ENCODE measurements at regions of chr13 and their contacts with region 1.

Region 1: DNA sequence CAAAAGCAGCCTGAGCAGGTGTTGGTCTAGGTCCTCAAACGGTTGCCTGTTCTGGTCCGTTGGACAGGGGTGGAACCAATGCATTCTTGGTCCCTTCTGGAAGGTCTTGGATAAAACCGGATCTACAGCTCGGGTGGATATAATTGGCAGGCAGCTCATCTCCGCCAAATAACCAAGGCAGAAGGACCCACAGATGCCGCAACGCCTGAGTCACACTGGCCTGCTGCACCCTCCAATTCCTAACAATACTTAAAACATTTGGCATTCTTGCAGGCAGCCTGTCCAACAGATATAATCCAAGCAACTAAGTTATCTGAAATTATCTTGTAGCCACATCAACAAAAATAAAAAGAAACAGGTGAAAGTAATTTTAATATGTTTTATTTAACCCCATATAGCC is 59.0 kb upstream of the FGF14 start:
- DNase-seq: no peak
- CTCF ChIP-seq: no peak

Region 2: GRCh38 chr13:102141625-102142472 is 319.0 kb before region 1 on chr13:
- CTCF ChIA-PET with region 1: interaction called, 13 read pairs
- POLR2A ChIA-PET with region 1: no interaction called
- DNase-seq: peak; percentile 9
- CTCF ChIP-seq: peak; percentile 60

Region 3: GRCh38 chr13:102443234-102443633 is 17.6 kb before region 1 on chr13:
- CTCF ChIA-PET with region 1: interaction called, 10 read pairs
- POLR2A ChIA-PET with region 1: no interaction called
- DNase-seq: no peak
- CTCF ChIP-seq: no peak